Endothelial cell of umbilical vein (primary cell): ENCODE measurements at regions of chr3 and their contacts with region 1.

Region 1: GRCh38 chr3:116702334-116702733 is 7.2 kb upstream of the TUSC7 start:
- DNase-seq: no peak
- H3K4me3 ChIP-seq: no peak overlapping the region
- H3K27ac ChIP-seq: no peak overlapping the region
- H3K4me1 ChIP-seq: no peaks in the 10 kb centered on the region
- H3K27me3 ChIP-seq: no peaks in the 10 kb centered on the region
- CTCF ChIP-seq: no peak
- POLR2A ChIP-seq: no peak

Region 2: DNA sequence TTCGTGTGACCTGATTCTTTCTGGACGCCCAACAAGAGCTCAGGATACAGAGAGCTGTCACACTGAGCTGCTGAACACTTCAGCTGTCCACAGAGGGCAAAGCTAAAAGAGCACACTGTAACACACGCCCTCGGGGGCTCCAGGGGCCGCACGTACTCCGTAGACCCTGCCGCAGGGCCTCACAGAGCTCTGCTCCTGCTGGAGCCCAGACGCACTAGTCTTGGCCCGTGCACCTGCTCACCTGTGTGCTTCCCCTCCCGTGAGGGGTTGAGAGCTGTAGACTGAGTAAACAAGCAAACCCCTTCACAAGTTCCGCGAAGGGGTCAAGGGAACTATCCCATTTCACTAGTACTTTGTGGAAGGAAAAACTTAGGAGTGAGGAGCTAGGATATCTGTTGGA is 23.5 kb before region 1 on chr3:
- CTCF ChIA-PET with region 1: no interaction called
- POLR2A ChIA-PET with region 1: no interaction called
- dilution Hi-C with region 1: no loop called
- intact Hi-C with region 1: loop called (anchors 1 kb)
- DNase-seq: no peak
- H3K4me3 ChIP-seq: no peak overlapping the region
- H3K27ac ChIP-seq: no peak overlapping the region
- H3K4me1 ChIP-seq: no peaks in the 10 kb centered on the region
- H3K27me3 ChIP-seq: no peaks in the 10 kb centered on the region
- CTCF ChIP-seq: no peak
- POLR2A ChIP-seq: no peak

Region 3: GRCh38 chr3:116749388-116749787 is 47.1 kb after region 1 on chr3:
- CTCF ChIA-PET with region 1: no interaction called
- POLR2A ChIA-PET with region 1: no interaction called
- dilution Hi-C with region 1: no loop called
- intact Hi-C with region 1: no loop called
- DNase-seq: no peak
- H3K4me3 ChIP-seq: no peak overlapping the region
- H3K27ac ChIP-seq: no peak overlapping the region
- H3K4me1 ChIP-seq: no peaks in the 10 kb centered on the region
- H3K27me3 ChIP-seq: no peaks in the 10 kb centered on the region
- CTCF ChIP-seq: no peak
- POLR2A ChIP-seq: no peak